Panc1 (cell line): ENCODE measurements at regions of chr5 and their contacts with region 1.

Region 1: DNA sequence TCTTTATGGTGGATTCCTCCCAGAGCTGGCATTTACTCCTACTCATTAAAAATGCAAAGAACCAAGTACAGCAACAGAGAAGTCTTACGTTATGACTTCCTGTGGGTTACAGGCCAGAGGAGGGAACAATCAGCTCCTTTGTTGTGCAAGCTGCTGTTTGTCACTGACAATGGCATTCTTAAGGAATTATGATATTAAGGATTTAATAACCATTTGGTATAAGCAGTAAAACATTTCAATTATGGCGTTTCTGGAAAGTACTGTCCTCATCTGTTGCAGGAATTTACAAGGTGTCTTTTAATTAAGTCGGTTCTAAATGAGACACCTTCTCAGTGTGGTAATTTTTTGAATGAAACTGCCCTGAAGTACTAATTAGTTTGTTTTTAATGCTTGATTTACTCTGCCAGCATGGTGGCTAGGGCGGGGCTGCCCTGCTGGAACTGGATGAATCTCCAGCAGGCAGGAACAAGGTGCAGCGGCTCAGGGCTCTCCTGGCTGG is 49.1 kb upstream of the VDAC1 start:
- DNase-seq: no peak
- ATAC-seq: peak; percentile 88
- H3K4me3 ChIP-seq: no peak overlapping the region
- H3K27ac ChIP-seq: peak overlapping the region; percentile 64
- H3K4me1 ChIP-seq: peaks cover 24% of the 10 kb centered on the region
- H3K27me3 ChIP-seq: no peaks in the 10 kb centered on the region
- CTCF ChIP-seq: no peak

Region 2: GRCh38 chr5:134004592-134005375 is 49.1 kb before region 1 on chr5 and contains the start of gene VDAC1:
- CTCF ChIA-PET with region 1: no interaction called
- POLR2A ChIA-PET with region 1: interaction called, 11 read pairs
- in situ Hi-C with region 1: no loop called
- intact Hi-C with region 1: no loop called
- DNase-seq: no peak
- ATAC-seq: peak; percentile 91
- H3K4me3 ChIP-seq: peak within 1 kb of the TSS; percentile 79 to 82
- H3K27ac ChIP-seq: peak within 1 kb of the TSS; percentile 95
- H3K4me1 ChIP-seq: peaks cover 52% of the 10 kb centered on the region
- H3K27me3 ChIP-seq: no peaks in the 10 kb centered on the region
- CTCF ChIP-seq: no peak
- total RNA-seq, gene VDAC1: 395 TPM

Region 3: GRCh38 chr5:134069553-134069952 is 15.7 kb after region 1 on chr5:
- CTCF ChIA-PET with region 1: no interaction called
- POLR2A ChIA-PET with region 1: no interaction called
- in situ Hi-C with region 1: no loop called
- intact Hi-C with region 1: no loop called
- DNase-seq: no peak
- ATAC-seq: no peak
- H3K4me3 ChIP-seq: no peak overlapping the region
- H3K27ac ChIP-seq: no peak overlapping the region
- H3K4me1 ChIP-seq: no peaks in the 10 kb centered on the region; the same call in 1 of the 2 replicates
- H3K27me3 ChIP-seq: no peaks in the 10 kb centered on the region
- CTCF ChIP-seq: no peak